Right cardiac atrium (tissue), 5 donors: ENCODE measurements at regions of chr7 and their contacts with region 1.

Region 1: GRCh38 chr7:30564243-30564892 is 30.3 kb upstream of the GARS1 start:
- DNase-seq: peak; percentile 81 to 89 (median 83)
- ATAC-seq: peak; percentile 91 to 93
- H3K4me3 ChIP-seq: no peak overlapping the region
- H3K27ac ChIP-seq: no peak overlapping the region
- H3K4me1 ChIP-seq: peaks cover 6% of the 10 kb centered on the region
- H3K27me3 ChIP-seq: no peaks in the 10 kb centered on the region

Region 2: GRCh38 chr7:30430276-30430675 is 134.1 kb before region 1 on chr7:
- intact Hi-C with region 1: no loop called
- DNase-seq: peak in 1 of 3 donors; percentile 19
- ATAC-seq: peak in 1 of 2 donors; percentile 21
- H3K4me3 ChIP-seq: no peak overlapping the region
- H3K27ac ChIP-seq: peak overlapping the region; percentile 20
- H3K4me1 ChIP-seq: peaks cover 16% of the 10 kb centered on the region
- H3K27me3 ChIP-seq: no peaks in the 10 kb centered on the region

Region 3: DNA sequence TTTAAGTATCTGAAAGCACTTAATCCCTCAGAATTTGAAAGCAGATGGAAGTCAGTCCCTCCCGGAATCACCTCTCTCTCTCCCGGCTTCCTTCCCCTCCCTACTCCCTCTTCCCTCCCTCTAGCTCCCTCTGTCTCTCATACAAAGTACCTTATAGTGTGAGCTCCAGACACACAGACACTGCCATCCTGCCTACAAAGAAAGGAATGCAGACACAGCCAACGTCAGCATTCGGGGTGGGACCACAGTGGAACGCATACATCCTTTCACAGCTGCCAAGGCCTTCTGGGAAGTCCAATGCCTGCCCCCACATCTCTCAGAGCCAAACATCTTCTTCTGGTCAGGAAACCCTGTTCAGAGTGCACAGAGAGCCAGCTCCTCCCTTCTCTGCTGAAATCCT is 95.1 kb before region 1 on chr7:
- intact Hi-C with region 1: no loop called
- DNase-seq: peak; percentile 84 to 93 (median 93)
- ATAC-seq: peak; percentile 87 to 88
- H3K4me3 ChIP-seq: no peak overlapping the region
- H3K27ac ChIP-seq: peak overlapping the region; percentile 87
- H3K4me1 ChIP-seq: peaks cover 44% of the 10 kb centered on the region
- H3K27me3 ChIP-seq: no peaks in the 10 kb centered on the region

Region 4: GRCh38 chr7:30487371-30487770 is 77.0 kb before region 1 on chr7:
- intact Hi-C with region 1: no loop called
- DNase-seq: no peak
- ATAC-seq: no peak
- H3K4me3 ChIP-seq: no peak overlapping the region
- H3K27ac ChIP-seq: no peak overlapping the region
- H3K4me1 ChIP-seq: no peaks in the 10 kb centered on the region
- H3K27me3 ChIP-seq: no peaks in the 10 kb centered on the region

Region 5: DNA sequence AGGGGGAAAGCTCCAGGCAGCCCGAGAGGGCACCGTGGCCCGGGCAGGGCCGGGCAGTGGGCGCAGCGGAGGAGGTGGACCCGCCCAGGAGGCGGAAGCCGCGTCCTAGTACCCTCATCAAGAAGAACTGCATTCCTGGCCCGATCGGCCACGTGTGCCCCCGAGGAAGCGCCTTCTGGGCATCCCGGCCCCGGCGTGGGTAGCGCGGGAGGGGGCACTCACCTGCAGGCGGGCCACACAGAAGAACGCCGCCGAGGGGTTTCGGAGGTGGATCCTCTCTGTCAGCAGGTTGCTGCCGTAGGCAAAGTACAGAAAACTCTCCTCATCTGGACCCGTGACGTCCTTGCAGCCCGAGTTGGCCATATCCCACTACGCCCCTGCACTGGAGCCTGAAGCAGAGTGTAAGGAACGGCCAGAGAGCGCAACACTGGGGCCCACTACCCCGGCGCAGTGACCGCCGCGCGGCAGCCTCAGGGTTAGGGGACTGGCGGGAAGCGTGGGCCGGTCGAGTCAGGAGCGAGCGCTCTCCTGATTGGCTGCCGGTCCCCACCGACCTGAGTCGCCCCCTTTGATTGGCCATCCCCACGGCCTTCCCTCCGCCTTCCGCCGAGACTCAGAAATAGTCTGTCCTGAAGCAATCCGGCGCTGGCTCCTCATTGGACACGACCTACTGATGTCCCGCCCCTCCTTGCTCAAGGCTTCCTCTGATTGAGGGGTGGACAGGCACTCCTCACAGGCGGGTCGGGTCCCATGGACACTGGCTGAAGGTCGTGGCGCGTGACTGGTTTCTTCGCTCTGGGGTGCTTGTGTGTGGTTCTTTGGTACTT is 59.8 kb before region 1 on chr7 and contains the start of gene GGCT:
- intact Hi-C with region 1: loop called in 2 of 4 experiments (anchors 10 kb)
- DNase-seq: peak; percentile 99 to 100 (median 99)
- ATAC-seq: peak; percentile 100
- H3K4me3 ChIP-seq: peak within 1 kb of the TSS; percentile 68
- H3K27ac ChIP-seq: peak within 1 kb of the TSS; percentile 76
- H3K4me1 ChIP-seq: peaks cover 6% of the 10 kb centered on the region
- H3K27me3 ChIP-seq: no peaks in the 10 kb centered on the region
- total RNA-seq, gene GGCT: 21.2 to 25.1 (median 22.2) TPM